ENCODE measurements at regions of chr6 and their contacts with region 1.

Region 1: DNA sequence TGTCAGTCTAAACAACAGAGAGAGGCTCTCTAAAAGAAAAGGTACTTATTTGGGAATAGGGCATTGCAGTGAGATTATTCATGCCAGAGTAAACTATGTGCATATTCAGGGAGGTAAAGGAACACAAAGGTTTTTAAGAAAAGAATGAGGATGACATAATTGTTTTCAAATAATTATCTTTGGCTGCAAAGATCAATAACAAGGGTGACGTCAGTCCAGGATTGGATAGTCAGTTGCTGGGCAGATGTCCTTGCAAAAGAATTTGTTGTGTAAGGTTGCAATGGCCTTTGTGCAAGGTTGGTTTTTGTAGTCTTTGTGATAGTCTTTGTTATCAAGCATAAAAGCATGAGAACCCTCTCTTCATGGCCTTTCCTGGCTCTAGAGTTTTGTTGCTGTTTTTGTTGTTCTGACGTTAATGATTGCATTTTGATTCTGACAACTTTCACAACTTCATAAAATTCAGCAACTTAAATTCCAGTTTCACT is 17.7 kb downstream of the LOC128125822 start:
- DNase-seq: no peak

Region 2: GRCh38 chr6:63492476-63492875 is 97.5 kb before region 1 on chr6:
- intact Hi-C with region 1: no loop called
- DNase-seq: no peak

Region 3: GRCh38 chr6:63764318-63764916 is 174.4 kb after region 1 on chr6:
- intact Hi-C with region 1: loop called (anchors 5 kb)
- DNase-seq: peak in 1 of 42 donors; percentile 12

Measured in head of caudate nucleus (tissue), 42 donors.